PC-9 (cell line): ENCODE measurements at regions of chr2 and their contacts with region 1.

Region 1: GRCh38 chr2:20642055-20642971 is 8.6 kb downstream of the HS1BP3 start:
- DNase-seq: peak; percentile 51 to 78
- H3K4me3 ChIP-seq: no peak overlapping the region
- H3K27ac ChIP-seq: no peak overlapping the region
- H3K4me1 ChIP-seq: no peaks in the 10 kb centered on the region
- H3K27me3 ChIP-seq: no peaks in the 10 kb centered on the region
- CTCF ChIP-seq: peak; percentile 96

Region 2: GRCh38 chr2:19955544-19956422 is 686.5 kb before region 1 on chr2:
- CTCF ChIA-PET with region 1: no interaction called
- POLR2A ChIA-PET with region 1: no interaction called
- intact Hi-C with region 1: loop called (anchors 5 kb)
- DNase-seq: peak; percentile 57 to 69
- H3K4me3 ChIP-seq: no peak overlapping the region
- H3K27ac ChIP-seq: no peak overlapping the region
- H3K4me1 ChIP-seq: no peaks in the 10 kb centered on the region
- H3K27me3 ChIP-seq: no peaks in the 10 kb centered on the region
- CTCF ChIP-seq: peak; percentile 91

Region 3: GRCh38 chr2:20291106-20291564 is 351.2 kb before region 1 on chr2:
- CTCF ChIA-PET with region 1: no interaction called
- POLR2A ChIA-PET with region 1: no interaction called
- intact Hi-C with region 1: loop called (anchors 2 kb)
- DNase-seq: peak; percentile 57 to 77
- H3K4me3 ChIP-seq: no peak overlapping the region
- H3K27ac ChIP-seq: peak overlapping the region; percentile 32
- H3K4me1 ChIP-seq: peaks cover 29% of the 10 kb centered on the region
- H3K27me3 ChIP-seq: no peaks in the 10 kb centered on the region
- CTCF ChIP-seq: peak; percentile 83

Region 4: DNA sequence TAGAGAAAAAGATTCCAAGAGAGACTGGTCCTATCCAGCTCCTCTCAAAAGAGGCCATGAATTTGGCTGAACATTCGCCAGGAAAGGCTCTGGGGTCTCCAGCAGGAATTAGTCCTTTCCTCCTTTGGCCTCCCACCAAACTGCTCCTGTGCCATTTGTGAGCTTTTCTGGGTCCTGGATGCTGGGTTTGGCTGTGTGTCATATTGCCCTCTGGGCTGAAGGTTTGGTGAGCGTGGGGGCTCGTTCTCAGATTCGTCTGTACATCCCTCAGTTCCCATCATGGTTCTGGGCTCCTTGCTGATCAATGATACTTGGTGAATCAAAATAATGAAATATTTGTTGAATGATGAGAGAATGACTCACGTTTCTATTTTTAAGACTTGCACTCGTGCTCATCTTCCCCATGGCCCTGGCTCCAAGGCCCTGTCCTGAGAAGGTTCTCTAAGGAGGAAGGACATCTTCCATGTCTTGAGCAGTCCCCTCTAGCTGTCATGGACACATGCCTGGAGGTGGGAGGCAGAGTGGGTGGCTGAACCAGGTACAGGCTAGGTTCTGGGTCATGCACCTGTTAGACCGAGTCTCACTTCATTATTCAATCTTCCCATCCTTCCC is 243.3 kb before region 1 on chr2:
- CTCF ChIA-PET with region 1: interaction called, 3 read pairs
- POLR2A ChIA-PET with region 1: interaction called, 4 read pairs
- intact Hi-C with region 1: loop called (anchors 1 kb)
- DNase-seq: peak in 1 of 2 experiments; percentile 34
- H3K4me3 ChIP-seq: no peak overlapping the region
- H3K27ac ChIP-seq: no peak overlapping the region
- H3K4me1 ChIP-seq: no peaks in the 10 kb centered on the region
- H3K27me3 ChIP-seq: no peaks in the 10 kb centered on the region
- CTCF ChIP-seq: no peak

Region 5: GRCh38 chr2:20509766-20510495 is 132.4 kb before region 1 on chr2:
- CTCF ChIA-PET with region 1: interaction called, 12 read pairs
- POLR2A ChIA-PET with region 1: no interaction called
- intact Hi-C with region 1: no loop called
- DNase-seq: peak; percentile 37 to 76
- H3K4me3 ChIP-seq: no peak overlapping the region
- H3K27ac ChIP-seq: no peak overlapping the region
- H3K4me1 ChIP-seq: peaks cover 10% of the 10 kb centered on the region
- H3K27me3 ChIP-seq: no peaks in the 10 kb centered on the region
- CTCF ChIP-seq: no peak

Region 6: DNA sequence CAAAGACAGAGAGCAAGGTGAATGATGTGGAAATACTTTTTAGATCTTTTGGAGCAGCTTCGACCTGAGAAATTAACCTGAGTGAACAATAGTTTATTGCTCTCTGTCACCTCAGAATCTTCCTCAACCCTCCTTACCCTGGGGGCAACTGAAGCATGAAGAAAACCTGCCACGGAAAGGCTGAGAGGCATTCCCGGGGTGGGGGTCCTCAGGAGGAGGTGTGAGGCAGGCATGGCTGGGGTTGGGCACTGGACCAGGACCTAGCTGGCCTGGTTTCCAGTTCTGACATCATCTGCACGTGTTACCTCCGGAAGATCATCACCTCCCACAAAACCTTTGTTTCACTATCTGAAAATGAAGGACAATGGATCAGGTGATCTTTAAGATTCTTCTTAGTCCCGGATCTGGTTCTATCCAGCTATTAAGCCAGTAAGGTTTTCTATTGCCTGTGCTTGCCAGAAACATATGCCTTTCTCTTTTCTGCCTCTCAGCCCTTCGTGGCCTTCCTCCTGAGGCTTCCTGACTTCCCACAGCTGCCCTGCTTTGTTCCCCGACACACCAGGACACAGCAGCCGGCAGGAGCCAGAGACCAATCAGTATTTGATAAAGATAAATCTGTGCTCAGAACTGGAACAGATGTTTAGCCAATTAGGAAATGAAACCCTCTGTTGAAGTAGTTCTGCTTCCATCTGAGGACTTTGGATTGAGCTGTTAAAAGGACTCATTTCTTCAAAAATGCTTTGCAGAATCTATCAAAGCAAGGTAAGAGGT is 714.0 kb after region 1 on chr2:
- CTCF ChIA-PET with region 1: no interaction called
- POLR2A ChIA-PET with region 1: no interaction called
- intact Hi-C with region 1: no loop called
- DNase-seq: no peak
- H3K4me3 ChIP-seq: no peak overlapping the region
- H3K27ac ChIP-seq: no peak overlapping the region
- H3K4me1 ChIP-seq: no peaks in the 10 kb centered on the region
- H3K27me3 ChIP-seq: no peaks in the 10 kb centered on the region
- CTCF ChIP-seq: no peak